CD4-positive, alpha-beta T cell (primary cell): ENCODE measurements at regions of chr6 and their contacts with region 1.

Region 1: GRCh38 chr6:36985808-36986703 is at the start of gene MTCH1:
- DNase-seq: peak; percentile 73 to 96 (median 86)
- ATAC-seq: peak; percentile 85
- H3K4me3 ChIP-seq: peak within 1 kb of the TSS; percentile 90
- H3K4me3 Mint-ChIP-seq: peak within 1 kb of the TSS; percentile 99
- H3K27ac ChIP-seq: peak within 1 kb of the TSS; percentile 61 to 81
- H3K27ac Mint-ChIP-seq: no peak within 1 kb of the TSS
- H3K4me1 ChIP-seq: peaks cover 49% of the 10 kb centered on the region
- H3K4me1 Mint-ChIP-seq: peaks cover 23% of the 10 kb centered on the region
- H3K27me3 ChIP-seq: no peaks in the 10 kb centered on the region
- H3K27me3 Mint-ChIP-seq: no peaks in the 10 kb centered on the region
- CTCF ChIP-seq: no peak
- total RNA-seq, gene MTCH1: 231 to 239 TPM

Region 2: GRCh38 chr6:35920793-35921732 is 1065.0 kb before region 1 on chr6 and contains the start of gene SRPK1:
- CTCF ChIA-PET with region 1: no interaction called
- POLR2A ChIA-PET with region 1: no interaction called
- intact Hi-C with region 1: loop called in 1 of 2 experiments (anchors 5 kb)
- DNase-seq: peak; percentile 71 to 92 (median 81)
- ATAC-seq: peak; percentile 75
- H3K4me3 ChIP-seq: peak within 1 kb of the TSS; percentile 82
- H3K4me3 Mint-ChIP-seq: peak within 1 kb of the TSS; percentile 96
- H3K27ac ChIP-seq: peak within 1 kb of the TSS; percentile 2 to 59
- H3K27ac Mint-ChIP-seq: peak within 1 kb of the TSS; percentile 80
- H3K4me1 ChIP-seq: peaks cover 11% of the 10 kb centered on the region
- H3K4me1 Mint-ChIP-seq: peaks cover 44% of the 10 kb centered on the region
- H3K27me3 ChIP-seq: no peaks in the 10 kb centered on the region
- H3K27me3 Mint-ChIP-seq: no peaks in the 10 kb centered on the region
- CTCF ChIP-seq: no peak
- total RNA-seq, gene SRPK1: 23.0 to 29.1 TPM

Region 3: GRCh38 chr6:36874443-36875249 is 111.4 kb before region 1 on chr6 and contains the start of gene PPIL1:
- CTCF ChIA-PET with region 1: interaction called, 3 read pairs
- POLR2A ChIA-PET with region 1: interaction called, 23 read pairs
- intact Hi-C with region 1: no loop called
- DNase-seq: peak; percentile 71 to 94 (median 82)
- ATAC-seq: peak; percentile 91
- H3K4me3 ChIP-seq: peak within 1 kb of the TSS; percentile 69
- H3K4me3 Mint-ChIP-seq: peak within 1 kb of the TSS; percentile 95
- H3K27ac ChIP-seq: peak within 1 kb of the TSS; percentile 80 to 82
- H3K27ac Mint-ChIP-seq: peak within 1 kb of the TSS; percentile 95
- H3K4me1 ChIP-seq: peaks cover 14% of the 10 kb centered on the region
- H3K4me1 Mint-ChIP-seq: peaks cover 45% of the 10 kb centered on the region
- H3K27me3 ChIP-seq: peaks cover 0 to 5% of the 10 kb centered on the region in 2 experiments
- H3K27me3 Mint-ChIP-seq: peaks cover 17% of the 10 kb centered on the region
- CTCF ChIP-seq: no peak
- total RNA-seq, gene PPIL1: 1.8 to 2.2 TPM

Region 4: DNA sequence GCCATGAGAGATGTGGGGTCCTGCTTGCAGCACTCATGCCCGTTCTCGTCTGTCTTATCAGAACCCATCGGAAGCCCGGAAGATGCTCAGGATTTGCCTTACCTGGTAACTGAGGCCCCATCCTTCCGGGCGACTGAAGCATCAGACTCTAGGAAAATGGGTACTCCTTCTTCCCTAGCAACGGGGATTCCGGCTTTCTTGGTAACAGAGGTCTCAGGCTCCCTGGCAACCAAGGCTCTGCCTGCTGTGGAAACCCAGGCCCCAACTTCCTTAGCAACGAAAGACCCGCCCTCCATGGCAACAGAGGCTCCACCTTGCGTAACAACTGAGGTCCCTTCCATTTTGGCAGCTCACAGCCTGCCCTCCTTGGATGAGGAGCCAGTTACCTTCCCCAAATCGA is 23.2 kb before region 1 on chr6:
- CTCF ChIA-PET with region 1: no interaction called
- POLR2A ChIA-PET with region 1: interaction called, 31 read pairs
- intact Hi-C with region 1: loop called in 1 of 2 experiments (anchors 2 kb)
- DNase-seq: peak; percentile 67 to 93 (median 76)
- ATAC-seq: peak; percentile 81
- H3K4me3 ChIP-seq: no peak overlapping the region
- H3K4me3 Mint-ChIP-seq: peak overlapping the region; percentile 75
- H3K27ac ChIP-seq: peak overlapping the region in 1 of 2 donors; percentile 72
- H3K27ac Mint-ChIP-seq: peak overlapping the region; percentile 86
- H3K4me1 ChIP-seq: peaks cover 39% of the 10 kb centered on the region
- H3K4me1 Mint-ChIP-seq: peaks cover 50% of the 10 kb centered on the region
- H3K27me3 ChIP-seq: no peaks in the 10 kb centered on the region
- H3K27me3 Mint-ChIP-seq: no peaks in the 10 kb centered on the region
- CTCF ChIP-seq: no peak

Region 5: DNA sequence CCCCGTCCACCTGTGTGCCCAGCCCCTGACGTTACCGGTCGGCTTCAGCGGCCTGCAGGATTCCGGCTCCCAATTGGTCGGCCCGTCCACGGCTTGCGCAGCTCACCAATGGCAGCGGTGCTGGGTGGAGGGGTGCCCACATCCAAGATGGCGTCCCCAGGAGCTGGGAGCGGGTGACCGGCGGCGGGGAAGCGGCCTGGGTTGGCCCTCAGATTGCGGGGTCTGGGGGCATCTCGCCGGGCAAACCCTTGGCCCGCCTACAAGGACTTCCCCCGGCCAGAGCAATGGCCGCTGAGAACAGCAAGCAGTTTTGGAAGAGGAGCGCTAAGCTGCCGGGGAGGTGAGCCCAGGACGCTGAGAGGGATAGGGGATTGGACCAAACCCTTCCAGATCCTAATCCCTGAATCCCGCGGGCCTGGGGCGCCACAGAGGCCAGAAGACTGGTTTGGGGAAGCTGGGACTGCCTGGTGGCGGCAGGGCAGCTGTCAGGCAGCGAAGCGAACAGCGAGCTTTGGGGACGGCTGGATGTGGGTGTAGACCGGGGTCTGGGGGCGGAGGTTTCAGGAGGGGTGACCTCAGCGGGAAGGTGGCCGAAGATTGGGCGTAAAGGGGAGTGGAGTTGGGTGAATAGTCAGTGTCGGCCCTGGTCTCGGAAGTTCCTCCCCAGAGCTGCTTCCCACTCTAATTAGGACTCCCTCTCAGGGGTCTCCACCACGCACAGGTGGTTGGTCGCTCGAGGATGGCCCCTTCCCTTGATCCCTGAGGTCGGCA is 271.8 kb after region 1 on chr6 and contains the starts of genes TBC1D22B and TMEM217:
- CTCF ChIA-PET with region 1: interaction called, 4 read pairs
- POLR2A ChIA-PET with region 1: interaction called, 14 read pairs
- intact Hi-C with region 1: no loop called
- DNase-seq: peak; percentile 90 to 97 (median 94)
- ATAC-seq: peak; percentile 99
- H3K4me3 ChIP-seq: peak within 1 kb of the TSS; percentile 82
- H3K4me3 Mint-ChIP-seq: peak within 1 kb of the TSS; percentile 84
- H3K27ac ChIP-seq: peak within 1 kb of the TSS; percentile 86 to 92
- H3K27ac Mint-ChIP-seq: peak within 1 kb of the TSS; percentile 73
- H3K4me1 ChIP-seq: peaks cover 21% of the 10 kb centered on the region
- H3K4me1 Mint-ChIP-seq: peaks cover 46% of the 10 kb centered on the region
- H3K27me3 ChIP-seq: no peaks in the 10 kb centered on the region
- H3K27me3 Mint-ChIP-seq: no peaks in the 10 kb centered on the region
- CTCF ChIP-seq: no peak
- total RNA-seq, gene TBC1D22B: 5.9 to 6.6 TPM
- total RNA-seq, gene TMEM217: 0.41 to 0.47 TPM